Activated naive CD8-positive, alpha-beta T cell treated with anti-CD3 and anti-CD28 coated beads, Interleukin-2, amount 10 ng/mL, durations not matched to agents 7 days and 5 days (primary cell): ENCODE measurements at regions of chr12 and their contacts with region 1.

Region 1: GRCh38 chr12:49069507-49070346 is at the start of gene RHEBL1:
- DNase-seq: peak; percentile 99
- ATAC-seq: peak; percentile 100
- H3K4me3 Mint-ChIP-seq: peak within 1 kb of the TSS; percentile 92
- H3K27ac Mint-ChIP-seq: peak within 1 kb of the TSS; percentile 79
- H3K4me1 Mint-ChIP-seq: peaks cover 20% of the 10 kb centered on the region
- H3K27me3 Mint-ChIP-seq: no peaks in the 10 kb centered on the region
- total RNA-seq, gene RHEBL1: 8.0 to 9.7 TPM

Region 2: DNA sequence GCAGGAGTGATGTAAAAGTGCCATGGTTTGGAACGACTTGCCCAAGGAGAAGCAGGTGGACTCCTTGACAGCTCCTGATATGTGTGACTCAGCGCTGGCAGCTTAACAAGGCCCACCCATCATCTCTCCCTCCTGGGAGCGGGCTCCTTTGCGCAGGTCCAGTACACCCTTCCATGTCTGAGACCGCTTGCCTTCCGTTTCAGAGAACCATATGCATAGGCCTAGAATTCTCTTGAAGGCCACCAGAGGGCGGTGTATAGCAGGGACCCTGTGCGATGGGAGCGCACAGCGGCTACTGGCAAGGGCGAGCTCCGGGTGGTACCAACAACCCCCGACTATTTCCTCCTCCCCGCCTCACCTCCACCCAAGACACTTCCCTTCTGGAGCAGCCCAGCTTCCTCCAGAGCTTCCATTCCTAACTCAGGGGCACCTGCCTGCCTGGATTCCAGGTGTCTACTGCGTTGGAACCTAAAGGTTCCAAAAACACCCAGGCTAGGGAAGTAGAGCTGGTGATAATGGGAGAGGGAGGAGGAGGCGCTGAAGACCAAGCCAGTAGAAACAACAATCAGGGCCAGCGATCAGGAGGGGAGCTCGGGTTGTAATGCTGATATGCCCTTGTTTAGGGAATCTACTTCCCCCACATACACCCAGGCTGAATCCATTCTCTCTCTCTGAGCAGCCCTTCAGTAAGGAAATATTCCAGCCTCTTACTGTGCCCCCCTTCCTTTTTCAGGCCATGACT is 18.6 kb after region 1 on chr12:
- POLR2A ChIA-PET with region 1: interaction called, 15 read pairs
- DNase-seq: peak; percentile 69
- ATAC-seq: peak; percentile 86
- H3K4me3 Mint-ChIP-seq: peak overlapping the region; percentile 46
- H3K27ac Mint-ChIP-seq: no peak overlapping the region
- H3K4me1 Mint-ChIP-seq: peaks cover 49% of the 10 kb centered on the region
- H3K27me3 Mint-ChIP-seq: peaks cover 44% of the 10 kb centered on the region

Region 3: DNA sequence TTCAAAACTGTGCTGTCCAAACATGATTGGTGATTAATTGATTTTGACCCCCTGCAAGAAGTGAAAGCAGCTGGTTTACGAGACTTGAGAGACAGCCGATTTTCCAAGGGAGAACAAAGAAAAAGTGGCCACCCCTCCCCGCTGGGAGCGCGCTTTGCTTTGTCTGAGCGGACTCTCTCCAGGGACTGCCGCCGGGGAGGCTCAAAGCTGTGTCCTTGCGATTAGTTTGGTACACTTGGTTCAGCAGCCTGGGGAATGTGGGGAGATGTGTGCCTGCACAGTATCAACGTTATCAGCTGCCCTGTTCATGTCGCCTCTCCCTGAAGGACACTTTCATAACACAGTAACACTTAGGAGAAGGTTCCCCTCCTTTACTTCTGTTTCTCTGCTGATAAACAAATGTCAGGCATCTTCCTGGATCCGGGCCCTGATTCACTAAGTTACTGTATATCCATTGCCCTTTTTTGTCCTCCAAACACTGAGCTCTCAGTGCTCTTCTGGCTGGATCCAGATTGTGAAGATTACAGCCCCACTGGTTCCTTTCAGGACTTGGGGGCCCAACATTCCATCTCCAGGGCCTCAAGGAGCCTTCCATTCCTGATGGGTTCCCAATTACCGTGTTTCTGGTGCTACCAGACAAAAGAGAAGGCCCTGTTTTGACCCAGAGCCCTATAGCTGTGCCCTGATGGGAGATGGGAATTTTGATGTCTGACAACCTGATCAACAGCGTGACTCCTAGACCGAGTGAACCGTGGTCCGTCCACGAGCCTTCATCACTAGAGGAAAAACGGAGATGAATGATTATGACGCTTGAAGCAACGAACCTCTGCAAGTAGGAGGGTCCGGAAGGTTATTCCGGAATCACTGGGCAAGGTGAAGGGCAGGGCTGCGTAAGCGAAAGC is 163.5 kb after region 1 on chr12:
- POLR2A ChIA-PET with region 1: interaction called, 11 read pairs
- DNase-seq: no peak
- ATAC-seq: no peak
- H3K4me3 Mint-ChIP-seq: no peak overlapping the region
- H3K27ac Mint-ChIP-seq: peak overlapping the region; percentile 66
- H3K4me1 Mint-ChIP-seq: peaks cover 6% of the 10 kb centered on the region
- H3K27me3 Mint-ChIP-seq: peaks cover 4% of the 10 kb centered on the region